ENCODE measurements at regions of chr2 and their contacts with region 1.

Region 1: GRCh38 chr2:69933839-69934613 is 19.1 kb downstream of the MXD1 start:
- DNase-seq: peak in 1 of 2 donors; percentile 41
- H3K4me3 ChIP-seq: no peak overlapping the region
- H3K27ac ChIP-seq: peak overlapping the region; percentile 18 to 66
- H3K4me1 ChIP-seq: peaks cover 0 to 38% (median 22%) of the 10 kb centered on the region in 4 donors
- H3K27me3 ChIP-seq: no peaks in the 10 kb centered on the region
- CTCF ChIP-seq: no peak

Region 2: DNA sequence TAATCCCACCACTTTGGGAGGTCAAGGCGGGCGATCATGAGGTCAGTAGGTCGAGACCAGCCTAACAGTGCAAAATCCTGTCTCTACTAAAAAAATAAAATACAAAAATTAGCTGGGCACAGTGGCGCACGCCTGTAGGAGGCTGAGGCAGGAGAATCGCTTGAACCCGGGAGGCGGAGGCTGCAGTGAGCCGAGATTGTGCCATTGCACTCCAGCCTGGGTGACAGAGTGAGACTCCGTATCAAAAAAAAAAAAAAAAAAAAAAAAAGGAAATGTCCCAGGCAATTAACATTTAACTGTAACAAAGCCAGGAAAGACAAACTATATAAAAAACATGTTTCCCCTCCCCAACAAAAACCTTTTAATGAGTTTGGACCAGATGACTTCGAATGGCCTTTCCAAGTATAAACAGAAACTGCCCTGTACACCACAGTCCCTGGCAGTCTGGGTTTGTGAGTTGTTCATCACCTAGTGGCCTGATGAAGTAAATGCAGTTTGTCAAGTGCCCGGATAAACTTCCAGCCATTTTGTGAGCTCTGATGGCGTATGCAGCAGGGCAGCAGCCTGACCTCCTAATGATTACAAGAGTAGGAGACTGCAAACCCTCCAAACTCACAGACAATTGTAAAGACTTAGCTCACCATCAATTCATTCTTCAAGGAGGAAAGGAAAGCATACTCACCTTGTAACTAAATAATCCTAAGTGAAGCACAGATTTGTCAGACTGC is 136.7 kb after region 1 on chr2:
- intact Hi-C with region 1: loop called (anchors 5 kb)
- DNase-seq: peak; percentile 72 to 80
- H3K4me3 ChIP-seq: peak overlapping the region; percentile 17 to 33
- H3K27ac ChIP-seq: peak overlapping the region; percentile 61 to 76
- H3K4me1 ChIP-seq: peaks cover 0 to 23% (median 4%) of the 10 kb centered on the region in 4 donors
- H3K27me3 ChIP-seq: no peaks in the 10 kb centered on the region
- CTCF ChIP-seq: peak; percentile 77 to 84

Measured in tibial artery (tissue), 4 donors.